ENCODE measurements at regions of chr4 and their contacts with region 1.

Region 1: GRCh38 chr4:53914313-53915016 is 149.9 kb downstream of the CHIC2 start:
- DNase-seq: no peak
- H3K4me3 ChIP-seq: no peak overlapping the region
- H3K27ac ChIP-seq: no peak overlapping the region
- H3K4me1 ChIP-seq: no peaks in the 10 kb centered on the region
- H3K27me3 ChIP-seq: peaks cover 3% of the 10 kb centered on the region
- CTCF ChIP-seq: no peak

Region 2: GRCh38 chr4:54032558-54033135 is 118.2 kb after region 1 on chr4:
- CTCF ChIA-PET with region 1: interaction called, 10 read pairs
- POLR2A ChIA-PET with region 1: no interaction called
- intact Hi-C with region 1: no loop called
- DNase-seq: no peak
- H3K4me3 ChIP-seq: no peak overlapping the region
- H3K27ac ChIP-seq: no peak overlapping the region
- H3K4me1 ChIP-seq: no peaks in the 10 kb centered on the region
- H3K27me3 ChIP-seq: no peaks in the 10 kb centered on the region
- CTCF ChIP-seq: no peak

Measured in A673 (cell line).